ENCODE measurements at regions of chr9 and their contacts with region 1.

Region 1: GRCh38 chr9:129823935-129824601 is at the start of gene TOR1A:
- DNase-seq: peak; percentile 70 to 97
- H3K4me3 ChIP-seq: peak within 1 kb of the TSS; percentile 69 to 98
- H3K27ac ChIP-seq: peak within 1 kb of the TSS; percentile 80 to 81
- H3K4me1 ChIP-seq: peaks cover 0 to 7% of the 10 kb centered on the region in 2 donors
- H3K27me3 ChIP-seq: no peaks in the 10 kb centered on the region
- CTCF ChIP-seq: no peak
- total RNA-seq, gene TOR1A: 67.7 TPM

Region 2: DNA sequence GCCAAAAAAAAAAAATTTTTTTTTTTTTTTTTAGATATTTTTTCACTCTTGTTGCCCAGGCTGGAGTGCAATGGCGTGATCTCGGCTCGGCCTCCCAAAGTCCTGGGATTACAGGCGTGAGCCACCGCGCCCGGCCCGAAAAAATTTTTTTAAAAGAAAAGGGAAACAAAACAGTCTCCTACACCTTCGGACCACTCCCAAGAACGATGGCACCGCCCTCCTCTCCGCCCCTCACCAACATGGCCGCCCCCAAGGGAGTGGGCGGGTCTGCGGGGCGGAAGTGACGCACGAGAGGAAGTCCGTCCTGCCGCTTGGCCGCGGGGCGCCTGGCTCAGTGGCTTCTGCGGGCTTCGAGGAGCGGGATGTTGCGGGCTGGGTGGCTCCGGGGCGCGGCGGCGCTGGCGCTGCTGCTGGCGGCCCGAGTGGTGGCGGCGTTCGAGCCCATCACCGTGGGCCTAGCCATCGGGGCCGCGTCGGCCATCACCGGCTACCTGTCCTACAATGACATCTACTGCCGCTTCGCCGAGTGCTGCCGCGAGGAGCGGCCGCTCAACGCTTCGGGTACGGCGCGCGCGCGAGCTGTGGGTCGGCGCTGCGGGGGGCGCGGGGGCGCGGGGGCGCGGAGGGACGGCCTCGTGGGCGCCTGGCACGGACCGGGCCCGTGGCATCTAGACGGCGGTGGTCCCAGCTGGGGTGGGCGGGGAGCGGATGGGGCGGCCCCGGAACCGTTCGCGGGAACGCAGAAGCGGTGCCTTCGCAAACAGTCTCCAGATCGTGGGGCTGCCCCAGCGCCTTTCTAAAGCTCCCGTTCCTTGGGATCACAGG is 21.0 kb before region 1 on chr9 and contains the start of gene TOR1B:
- intact Hi-C with region 1: loop called (anchors 2 kb)
- DNase-seq: peak; percentile 75 to 97
- H3K4me3 ChIP-seq: peak within 1 kb of the TSS; percentile 71 to 82
- H3K27ac ChIP-seq: peak within 1 kb of the TSS; percentile 75 to 85
- H3K4me1 ChIP-seq: peaks cover 8 to 10% of the 10 kb centered on the region in 2 donors
- H3K27me3 ChIP-seq: no peaks in the 10 kb centered on the region
- CTCF ChIP-seq: no peak
- total RNA-seq, gene TOR1B: 51.7 TPM

Region 3: GRCh38 chr9:129835021-129835871 is 11.2 kb after region 1 on chr9 and contains the starts of genes C9orf78 and USP20:
- intact Hi-C with region 1: loop called (anchors 1 kb)
- DNase-seq: peak; percentile 67 to 97
- H3K4me3 ChIP-seq: peak within 1 kb of the TSS; percentile 93 to 100
- H3K27ac ChIP-seq: peak within 1 kb of the TSS; percentile 95 to 98
- H3K4me1 ChIP-seq: peaks cover 5 to 42% of the 10 kb centered on the region in 2 donors
- H3K27me3 ChIP-seq: no peaks in the 10 kb centered on the region
- CTCF ChIP-seq: no peak
- total RNA-seq, gene C9orf78: 19.2 TPM
- total RNA-seq, gene USP20: 34.0 TPM

Region 4: GRCh38 chr9:131590908-131591844 is 1767.1 kb after region 1 on chr9:
- intact Hi-C with region 1: no loop called
- DNase-seq: peak; percentile 37 to 88
- H3K4me3 ChIP-seq: no peak overlapping the region
- H3K27ac ChIP-seq: no peak overlapping the region
- H3K4me1 ChIP-seq: no peaks in the 10 kb centered on the region
- H3K27me3 ChIP-seq: no peaks in the 10 kb centered on the region
- CTCF ChIP-seq: peak; percentile 70 to 91 (median 82)